GM12878 (cell line): ENCODE measurements at regions of chr19 and their contacts with region 1.

Region 1: GRCh38 chr19:23249911-23250649 is at the start of gene ZNF724:
- DNase-seq: peak; percentile 95
- ATAC-seq: peak; percentile 100
- H3K4me3 ChIP-seq: peak within 1 kb of the TSS; percentile 95
- H3K27ac ChIP-seq: peak within 1 kb of the TSS; percentile 91
- H3K4me1 ChIP-seq: no peaks in the 10 kb centered on the region
- H3K27me3 ChIP-seq: no peaks in the 10 kb centered on the region
- CTCF ChIP-seq: no peak
- EP300 ChIP-seq: no peak
- POLR2A ChIP-seq: peak; percentile 87
- RAD21 ChIP-seq: no peak
- polyA plus RNA-seq, gene ZNF724: 0.71 to 1.1 TPM

Region 2: DNA sequence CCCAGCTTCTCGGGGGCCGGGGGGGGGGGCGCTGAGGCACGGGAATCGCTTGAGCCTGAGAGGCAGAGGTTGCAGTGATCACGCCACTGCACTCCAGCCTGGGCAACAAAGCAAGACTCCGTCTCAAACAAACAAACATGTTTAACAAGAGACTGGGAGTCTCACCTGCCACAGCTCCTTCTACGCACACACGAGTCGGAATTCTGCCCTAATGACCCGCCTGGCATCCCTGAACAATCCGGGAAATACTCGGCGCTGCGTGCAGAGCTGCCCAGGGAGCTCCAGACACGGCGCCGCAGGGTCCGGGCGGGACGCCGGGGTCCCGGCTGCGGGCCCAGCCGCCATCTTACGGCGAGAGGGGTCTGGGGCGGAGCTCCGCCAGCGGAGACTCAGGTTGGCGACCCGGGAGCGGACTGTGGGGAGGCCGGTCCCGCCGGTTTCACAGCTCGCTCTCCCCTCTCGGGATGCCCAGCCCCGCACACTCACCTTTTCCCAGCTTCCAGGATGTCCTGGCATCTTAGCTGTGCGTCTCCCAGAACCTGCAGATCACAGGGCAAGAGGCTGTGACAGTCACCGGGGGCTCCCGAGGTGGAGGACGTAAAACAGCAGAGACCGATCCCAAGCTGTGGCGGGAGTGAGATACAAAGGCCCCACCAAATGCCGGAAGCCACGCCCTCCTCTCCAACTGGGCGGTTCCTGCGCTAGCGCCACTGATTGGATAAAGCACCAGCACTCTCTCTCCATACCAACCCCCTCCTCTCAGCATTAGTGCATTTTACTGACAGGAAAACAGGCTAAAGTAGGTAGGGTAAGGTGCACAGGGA is 23.7 kb after region 1 on chr19:
- CTCF ChIA-PET with region 1: interaction called, 3 read pairs
- POLR2A ChIA-PET with region 1: interaction called, 14 read pairs
- RAD21 ChIA-PET with region 1: interaction called, 7 read pairs
- SMC1A ChIA-PET with region 1: interaction called, 6 read pairs
- in situ Hi-C with region 1: no loop called
- intact Hi-C with region 1: loop called (anchors 1 kb)
- DNase-seq: peak; percentile 81
- ATAC-seq: peak; percentile 100
- H3K4me3 ChIP-seq: peak overlapping the region; percentile 98
- H3K27ac ChIP-seq: peak overlapping the region; percentile 84
- H3K4me1 ChIP-seq: no peaks in the 10 kb centered on the region
- H3K27me3 ChIP-seq: no peaks in the 10 kb centered on the region
- CTCF ChIP-seq: no peak
- EP300 ChIP-seq: no peak
- POLR2A ChIP-seq: peak; percentile 92
- RAD21 ChIP-seq: no peak

Region 3: DNA sequence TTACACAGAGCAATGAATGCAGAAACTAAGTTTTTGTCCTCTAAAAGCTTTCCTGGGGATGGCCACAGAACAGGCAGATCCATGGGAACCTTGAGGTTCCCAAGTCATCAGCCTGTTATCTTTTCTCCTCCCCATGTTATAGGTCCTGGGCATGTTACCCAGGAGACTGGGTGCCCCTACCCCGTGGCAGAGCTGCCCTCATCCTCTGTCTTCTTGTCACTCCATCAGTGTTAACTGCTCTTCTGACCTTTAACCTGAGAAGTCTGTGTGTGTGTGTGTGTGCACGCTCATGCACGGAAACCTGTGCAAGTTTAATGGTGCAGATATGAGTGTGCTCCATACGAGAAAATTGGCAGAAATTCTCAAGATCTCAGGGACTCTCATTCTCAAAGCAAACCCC is 44.1 kb after region 1 on chr19:
- CTCF ChIA-PET with region 1: no interaction called
- POLR2A ChIA-PET with region 1: no interaction called
- RAD21 ChIA-PET with region 1: no interaction called
- SMC1A ChIA-PET with region 1: no interaction called
- in situ Hi-C with region 1: no loop called
- intact Hi-C with region 1: no loop called
- DNase-seq: no peak
- ATAC-seq: no peak
- H3K4me3 ChIP-seq: no peak overlapping the region
- H3K27ac ChIP-seq: no peak overlapping the region
- H3K4me1 ChIP-seq: no peaks in the 10 kb centered on the region
- H3K27me3 ChIP-seq: no peaks in the 10 kb centered on the region
- CTCF ChIP-seq: no peak
- EP300 ChIP-seq: no peak
- POLR2A ChIP-seq: no peak
- RAD21 ChIP-seq: no peak